ENCODE measurements at regions of chr1 and their contacts with region 1.

Region 1: DNA sequence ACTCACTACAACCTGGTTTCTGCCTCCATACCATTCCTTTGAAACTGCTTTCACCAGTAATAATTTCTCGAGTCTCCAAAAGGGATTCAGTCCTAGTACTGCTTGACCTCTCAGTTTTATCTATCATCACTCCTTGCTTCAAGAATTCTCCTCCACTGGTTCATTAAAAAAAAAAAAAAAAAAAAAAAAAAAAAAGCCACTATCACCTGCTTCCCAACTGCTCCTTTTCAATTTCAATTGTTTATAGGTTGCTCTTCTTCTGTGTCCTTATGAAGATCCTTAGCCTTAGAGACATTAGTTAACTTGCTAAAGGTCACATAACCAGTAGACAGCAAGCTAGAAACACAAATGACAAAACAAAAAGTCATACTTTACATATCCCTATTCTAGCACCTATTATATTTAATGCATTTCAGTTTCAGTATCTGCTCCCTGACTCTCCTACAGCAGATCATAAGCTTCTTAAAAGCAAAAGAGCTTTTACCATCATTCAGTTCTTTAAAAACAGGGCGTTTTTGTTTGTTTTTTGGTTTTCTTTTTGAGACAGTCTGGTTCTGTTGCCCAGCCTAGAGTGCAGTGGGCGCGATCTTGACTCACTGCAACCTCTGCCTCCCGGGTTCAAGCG is 7.1 kb downstream of the NRDC start:
- DNase-seq: no peak
- H3K4me3 ChIP-seq: no peak overlapping the region
- H3K27ac ChIP-seq: no peak overlapping the region
- H3K4me1 ChIP-seq: no peaks in the 10 kb centered on the region
- H3K27me3 ChIP-seq: no peaks in the 10 kb centered on the region
- CTCF ChIP-seq: no peak

Region 2: GRCh38 chr1:51600529-51600928 is 270.9 kb before region 1 on chr1:
- CTCF ChIA-PET with region 1: no interaction called
- dilution Hi-C with region 1: no loop called
- in situ Hi-C with region 1: no loop called
- intact Hi-C with region 1: no loop called
- DNase-seq: no peak
- H3K4me3 ChIP-seq: no peak overlapping the region
- H3K27ac ChIP-seq: no peak overlapping the region
- H3K4me1 ChIP-seq: no peaks in the 10 kb centered on the region
- H3K27me3 ChIP-seq: no peaks in the 10 kb centered on the region
- CTCF ChIP-seq: no peak

Region 3: GRCh38 chr1:51819810-51820209 is 51.7 kb before region 1 on chr1:
- CTCF ChIA-PET with region 1: no interaction called
- dilution Hi-C with region 1: no loop called
- in situ Hi-C with region 1: no loop called
- intact Hi-C with region 1: no loop called
- DNase-seq: no peak
- H3K4me3 ChIP-seq: no peak overlapping the region
- H3K27ac ChIP-seq: no peak overlapping the region
- H3K4me1 ChIP-seq: no peaks in the 10 kb centered on the region
- H3K27me3 ChIP-seq: no peaks in the 10 kb centered on the region
- CTCF ChIP-seq: no peak

Region 4: DNA sequence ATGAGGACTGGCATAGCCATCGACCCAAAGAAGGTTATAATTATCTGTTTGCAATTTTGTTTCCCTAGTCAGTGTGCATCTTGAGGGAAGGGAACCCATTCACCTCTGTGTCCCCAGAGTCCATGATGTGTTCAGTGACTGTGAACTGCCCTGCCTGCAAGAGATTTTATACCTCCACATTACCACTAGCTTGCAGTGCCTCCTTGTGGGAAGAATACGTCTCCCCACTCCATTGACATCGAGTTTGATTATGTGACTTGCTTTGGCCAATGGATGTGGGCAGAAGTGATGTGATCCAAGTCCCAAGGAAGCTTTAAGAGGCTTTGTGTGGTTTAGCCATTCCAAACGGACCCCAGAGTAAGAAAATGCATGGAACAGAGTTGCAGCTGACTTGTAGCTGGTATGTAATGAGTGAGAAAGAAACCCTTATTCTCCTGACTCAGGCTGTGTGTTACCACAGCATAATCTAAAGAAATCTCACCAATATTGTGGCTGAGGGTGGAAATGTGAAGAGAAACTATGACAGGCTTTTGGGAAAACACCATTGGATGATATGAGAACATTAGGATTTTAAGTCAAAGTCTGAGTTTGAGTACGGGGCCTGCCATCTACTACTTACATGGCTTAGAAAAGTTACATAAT is 54.8 kb after region 1 on chr1:
- CTCF ChIA-PET with region 1: no interaction called
- dilution Hi-C with region 1: loop called (anchors 5 kb)
- in situ Hi-C with region 1: no loop called
- intact Hi-C with region 1: no loop called
- DNase-seq: peak; percentile 35
- H3K4me3 ChIP-seq: no peak overlapping the region
- H3K27ac ChIP-seq: no peak overlapping the region
- H3K4me1 ChIP-seq: peaks cover 8% of the 10 kb centered on the region
- H3K27me3 ChIP-seq: no peaks in the 10 kb centered on the region
- CTCF ChIP-seq: peak; percentile 49 to 54

Measured in mammary epithelial cell (primary cell).